ENCODE measurements at regions of chr18 and their contacts with region 1.

Region 1: GRCh38 chr18:74196220-74197119 is 48.1 kb downstream of the TIMM21 start:
- DNase-seq: peak; percentile 86
- ATAC-seq: peak; percentile 92
- H3K4me3 ChIP-seq: peak overlapping the region; percentile 9 to 79 (median 45)
- H3K4me3 Mint-ChIP-seq: peak overlapping the region; percentile 82
- H3K27ac ChIP-seq: peak overlapping the region in 1 of 2 donors; percentile 71
- H3K27ac Mint-ChIP-seq: peak overlapping the region; percentile 84
- H3K4me1 ChIP-seq: peaks cover 0 to 11% of the 10 kb centered on the region in 2 donors
- H3K4me1 Mint-ChIP-seq: peaks cover 18% of the 10 kb centered on the region
- H3K27me3 ChIP-seq: no peaks in the 10 kb centered on the region
- H3K27me3 Mint-ChIP-seq: peaks cover 17% of the 10 kb centered on the region
- CTCF ChIP-seq: peak; percentile 95

Region 2: DNA sequence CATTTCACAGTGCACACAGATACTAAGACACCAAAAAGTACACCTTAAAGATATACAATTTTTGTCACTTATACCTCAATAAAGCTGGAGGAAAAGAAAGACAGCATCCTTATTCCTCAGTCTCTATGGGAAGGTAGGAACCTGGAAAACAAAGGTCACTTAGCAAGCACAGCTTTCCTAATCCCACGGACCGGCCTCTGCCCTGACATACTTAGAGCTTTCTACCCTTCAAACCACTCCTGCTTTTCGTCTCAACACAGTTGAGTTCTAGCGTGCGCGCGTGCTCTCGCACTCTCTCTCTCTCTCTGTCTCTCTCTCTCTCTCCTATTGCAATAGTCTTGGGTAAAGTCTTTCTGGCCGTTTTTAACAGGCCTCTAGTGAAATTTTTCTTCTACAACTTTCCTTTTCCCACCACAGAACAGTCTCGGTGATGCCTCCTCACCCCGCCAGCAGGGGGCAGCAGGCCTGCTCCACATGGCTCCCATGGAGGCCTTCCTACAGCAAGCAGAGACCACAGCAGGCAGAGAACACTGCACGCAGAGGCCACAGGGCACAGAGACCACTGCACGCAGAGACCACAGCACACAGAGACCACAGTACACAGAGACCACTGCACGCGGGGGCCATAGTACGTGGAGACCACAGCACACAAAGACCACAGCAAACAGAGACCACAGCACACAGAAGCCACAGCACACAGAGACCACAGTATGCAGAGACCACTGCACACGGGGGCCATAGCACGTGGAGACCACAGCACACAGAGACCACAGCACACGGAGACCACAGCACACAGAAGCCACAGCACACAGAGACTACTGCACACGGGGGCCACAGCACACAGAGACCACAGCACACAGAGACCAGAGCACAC is 155.8 kb before region 1 on chr18:
- CTCF ChIA-PET with region 1: no interaction called
- POLR2A ChIA-PET with region 1: no interaction called
- intact Hi-C with region 1: loop called (anchors 1 kb)
- DNase-seq: peak; percentile 62
- ATAC-seq: peak; percentile 79
- H3K4me3 ChIP-seq: no peak overlapping the region
- H3K4me3 Mint-ChIP-seq: no peak overlapping the region
- H3K27ac ChIP-seq: no peak overlapping the region
- H3K27ac Mint-ChIP-seq: no peak overlapping the region
- H3K4me1 ChIP-seq: peaks cover 18% of the 10 kb centered on the region in 2 donors
- H3K4me1 Mint-ChIP-seq: peaks cover 20% of the 10 kb centered on the region
- H3K27me3 ChIP-seq: no peaks in the 10 kb centered on the region
- H3K27me3 Mint-ChIP-seq: no peaks in the 10 kb centered on the region
- CTCF ChIP-seq: peak; percentile 66

Region 3: GRCh38 chr18:74060579-74060978 is 135.9 kb before region 1 on chr18:
- CTCF ChIA-PET with region 1: no interaction called
- POLR2A ChIA-PET with region 1: no interaction called
- intact Hi-C with region 1: no loop called
- DNase-seq: peak; percentile 61
- ATAC-seq: peak; percentile 21
- H3K4me3 ChIP-seq: no peak overlapping the region
- H3K4me3 Mint-ChIP-seq: no peak overlapping the region
- H3K27ac ChIP-seq: peak overlapping the region; percentile 22 to 53
- H3K27ac Mint-ChIP-seq: peak overlapping the region; percentile 81
- H3K4me1 ChIP-seq: peaks cover 39 to 46% of the 10 kb centered on the region in 2 donors
- H3K4me1 Mint-ChIP-seq: peaks cover 48% of the 10 kb centered on the region
- H3K27me3 ChIP-seq: no peaks in the 10 kb centered on the region
- H3K27me3 Mint-ChIP-seq: no peaks in the 10 kb centered on the region
- CTCF ChIP-seq: no peak

Region 4: DNA sequence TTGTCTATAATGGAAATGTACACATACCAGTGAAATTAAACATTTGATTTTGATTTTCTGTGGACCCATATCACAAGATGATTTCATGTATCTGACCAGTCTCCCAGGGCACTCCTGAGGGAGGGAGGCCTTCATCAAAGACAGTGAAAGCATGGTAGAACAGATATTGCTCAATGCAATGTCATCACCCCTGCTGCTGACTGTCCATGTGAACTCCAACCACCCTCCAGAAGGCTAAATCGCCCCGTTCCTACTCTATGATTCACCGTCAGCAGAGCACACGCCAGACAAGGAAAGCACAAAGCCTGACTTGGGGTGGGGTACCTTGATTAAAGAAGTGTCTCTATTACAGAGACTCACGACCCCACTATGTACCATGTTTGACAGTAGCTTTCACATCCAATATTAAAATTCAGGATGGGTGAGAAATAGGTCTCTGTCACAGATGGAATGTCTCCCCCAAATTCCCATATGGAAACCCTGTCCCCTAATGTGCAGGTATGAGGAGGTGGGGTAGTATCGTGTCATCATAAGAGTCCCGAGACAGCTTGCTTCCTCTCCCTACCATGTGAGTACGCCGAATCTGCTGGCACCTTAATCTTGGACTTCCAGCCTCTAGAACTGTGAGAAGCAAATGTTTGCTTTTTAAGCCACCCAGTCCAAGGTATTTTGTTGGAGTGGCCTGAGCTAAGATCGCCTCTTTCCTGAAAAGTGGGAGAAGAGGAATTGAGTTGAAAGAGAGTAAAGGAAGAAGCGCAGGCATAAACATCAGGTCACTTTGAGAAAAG is 52.9 kb after region 1 on chr18:
- CTCF ChIA-PET with region 1: interaction called, 6 read pairs
- POLR2A ChIA-PET with region 1: no interaction called
- intact Hi-C with region 1: loop called (anchors 5 kb)
- DNase-seq: no peak
- ATAC-seq: no peak
- H3K4me3 ChIP-seq: peak overlapping the region in 1 of 5 experiments; percentile 8
- H3K4me3 Mint-ChIP-seq: peak overlapping the region; percentile 27
- H3K27ac ChIP-seq: peak overlapping the region; percentile 53 to 80
- H3K27ac Mint-ChIP-seq: peak overlapping the region; percentile 80
- H3K4me1 ChIP-seq: peaks cover 0 to 36% of the 10 kb centered on the region in 2 donors
- H3K4me1 Mint-ChIP-seq: peaks cover 38% of the 10 kb centered on the region
- H3K27me3 ChIP-seq: no peaks in the 10 kb centered on the region
- H3K27me3 Mint-ChIP-seq: no peaks in the 10 kb centered on the region
- CTCF ChIP-seq: no peak

Region 5: DNA sequence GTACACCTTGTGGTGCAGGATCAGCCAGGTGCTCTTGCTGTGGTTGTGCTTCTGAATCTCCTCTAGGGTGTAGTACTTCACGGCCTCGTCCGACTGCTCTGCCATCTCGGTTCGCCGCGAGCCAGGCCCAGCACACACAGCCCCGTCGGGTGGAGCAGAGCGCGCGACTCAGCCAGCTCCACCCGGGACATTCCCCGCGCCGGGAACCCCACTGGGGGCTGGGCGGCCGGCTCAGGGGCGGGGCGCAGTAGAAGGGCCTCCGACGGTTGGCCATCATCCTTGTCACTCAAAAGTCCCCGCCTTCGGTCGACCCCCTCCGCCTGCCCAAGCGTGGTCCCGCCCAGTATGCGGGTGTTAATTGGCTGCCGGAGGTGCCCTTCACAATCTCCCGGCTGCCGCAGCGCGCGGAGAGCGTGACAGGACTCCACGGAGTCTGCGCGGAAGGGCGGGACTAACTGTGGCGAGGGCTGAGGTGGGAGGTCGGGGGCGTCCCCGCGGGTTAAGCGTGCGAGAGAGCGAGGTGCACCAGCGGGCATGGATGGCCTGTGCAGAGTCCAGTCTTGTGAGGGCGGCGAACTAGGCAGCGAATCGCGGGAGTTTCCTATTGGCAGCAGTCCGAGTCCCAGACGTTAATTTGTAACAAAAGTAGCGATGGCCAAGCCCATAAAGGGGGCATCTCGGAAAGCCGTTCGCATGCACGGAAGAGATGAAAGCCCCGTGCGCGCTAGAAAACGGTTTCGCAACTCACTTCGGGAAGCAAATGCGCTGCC is 95.5 kb after region 1 on chr18 and contains the start of gene CYB5A:
- CTCF ChIA-PET with region 1: interaction called, 3 read pairs
- POLR2A ChIA-PET with region 1: no interaction called
- intact Hi-C with region 1: loop called (anchors 1 kb)
- DNase-seq: peak; percentile 99
- ATAC-seq: peak; percentile 96
- H3K4me3 ChIP-seq: peak within 1 kb of the TSS; percentile 66 to 97 (median 85)
- H3K4me3 Mint-ChIP-seq: no peak within 1 kb of the TSS
- H3K27ac ChIP-seq: peak within 1 kb of the TSS; percentile 56 to 66
- H3K27ac Mint-ChIP-seq: peak within 1 kb of the TSS; percentile 89
- H3K4me1 ChIP-seq: peaks cover 15 to 26% of the 10 kb centered on the region in 2 donors
- H3K4me1 Mint-ChIP-seq: peaks cover 41% of the 10 kb centered on the region
- H3K27me3 ChIP-seq: no peaks in the 10 kb centered on the region
- H3K27me3 Mint-ChIP-seq: no peaks in the 10 kb centered on the region
- CTCF ChIP-seq: peak; percentile 3
- total RNA-seq, gene CYB5A: 46.4 and 46.9 TPM in 2 replicates

Region 6: GRCh38 chr18:74495581-74496507 is 299.4 kb after region 1 on chr18 and contains the start of gene CNDP2:
- CTCF ChIA-PET with region 1: interaction called, 18 read pairs
- POLR2A ChIA-PET with region 1: no interaction called
- intact Hi-C with region 1: loop called (anchors 1 kb)
- DNase-seq: peak; percentile 99
- ATAC-seq: peak; percentile 79
- H3K4me3 ChIP-seq: peak within 1 kb of the TSS; percentile 19 to 95 (median 81)
- H3K4me3 Mint-ChIP-seq: peak within 1 kb of the TSS; percentile 95
- H3K27ac ChIP-seq: peak within 1 kb of the TSS; percentile 85 to 91
- H3K27ac Mint-ChIP-seq: peak within 1 kb of the TSS; percentile 94
- H3K4me1 ChIP-seq: peaks cover 38% of the 10 kb centered on the region in 2 donors
- H3K4me1 Mint-ChIP-seq: peaks cover 43% of the 10 kb centered on the region
- H3K27me3 ChIP-seq: no peaks in the 10 kb centered on the region
- H3K27me3 Mint-ChIP-seq: no peaks in the 10 kb centered on the region
- CTCF ChIP-seq: no peak
- total RNA-seq, gene CNDP2: 182 and 196 TPM in 2 replicates